H1 (cell line): ENCODE measurements at regions of chr7 and their contacts with region 1.

Region 1: GRCh38 chr7:135645296-135645904 is 16.9 kb upstream of the STMP1 start:
- DNase-seq: no peak
- H3K4me3 ChIP-seq: no peak overlapping the region
- H3K27ac ChIP-seq: no peak overlapping the region
- H3K4me1 ChIP-seq: no peaks in the 10 kb centered on the region
- H3K27me3 ChIP-seq: no peaks in the 10 kb centered on the region
- CTCF ChIP-seq: peak in 2 of 3 experiments; percentile 32 to 58; a peak in 2 of 4 replicates
- EP300 ChIP-seq: no peak
- POLR2A ChIP-seq: no peak
- RAD21 ChIP-seq: peak; percentile 26 to 32; a peak in 2 of 4 replicates

Region 2: GRCh38 chr7:135573541-135573940 is 71.9 kb before region 1 on chr7:
- CTCF ChIA-PET with region 1: interaction called, 17 read pairs
- POLR2A ChIA-PET with region 1: interaction called, 3 read pairs
- DNase-seq: no peak
- H3K4me3 ChIP-seq: no peak overlapping the region
- H3K27ac ChIP-seq: no peak overlapping the region
- H3K4me1 ChIP-seq: no peaks in the 10 kb centered on the region
- H3K27me3 ChIP-seq: no peaks in the 10 kb centered on the region
- CTCF ChIP-seq: no peak
- EP300 ChIP-seq: no peak
- POLR2A ChIP-seq: no peak
- RAD21 ChIP-seq: no peak

Region 3: DNA sequence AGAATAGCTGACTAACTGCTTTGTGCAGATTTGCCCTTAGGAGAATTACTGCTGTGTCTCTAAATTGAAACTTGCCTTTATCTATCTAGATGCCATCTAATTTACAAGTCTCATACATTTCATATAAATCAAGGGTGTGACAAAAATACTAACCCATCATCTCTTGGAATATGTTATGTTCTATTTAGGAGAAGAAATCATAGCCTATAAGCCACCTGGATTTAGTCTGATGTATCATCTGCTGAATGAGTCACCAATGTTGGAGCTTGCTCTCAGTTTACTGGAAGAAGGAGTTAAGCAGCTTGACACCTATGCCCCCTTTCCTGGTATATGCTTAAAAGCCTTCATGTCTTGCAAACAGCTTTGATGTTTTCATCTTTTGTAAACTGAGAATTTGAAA is 44.2 kb before region 1 on chr7:
- CTCF ChIA-PET with region 1: interaction called, 18 read pairs
- POLR2A ChIA-PET with region 1: no interaction called
- DNase-seq: no peak
- H3K4me3 ChIP-seq: no peak overlapping the region
- H3K27ac ChIP-seq: no peak overlapping the region
- H3K4me1 ChIP-seq: no peaks in the 10 kb centered on the region
- H3K27me3 ChIP-seq: no peaks in the 10 kb centered on the region
- CTCF ChIP-seq: no peak
- EP300 ChIP-seq: no peak
- POLR2A ChIP-seq: no peak
- RAD21 ChIP-seq: no peak

Region 4: GRCh38 chr7:135620980-135621850 is 24.2 kb before region 1 on chr7:
- CTCF ChIA-PET with region 1: interaction called, 114 read pairs
- POLR2A ChIA-PET with region 1: no interaction called
- DNase-seq: peak in 1 of 2 experiments; percentile 1
- H3K4me3 ChIP-seq: no peak overlapping the region
- H3K27ac ChIP-seq: no peak overlapping the region
- H3K4me1 ChIP-seq: no peaks in the 10 kb centered on the region
- H3K27me3 ChIP-seq: no peaks in the 10 kb centered on the region
- CTCF ChIP-seq: peak in 2 of 3 experiments; percentile 39 to 70; a peak in 2 of 4 replicates
- EP300 ChIP-seq: no peak
- POLR2A ChIP-seq: no peak
- RAD21 ChIP-seq: peak; percentile 25 to 31; a peak in 3 of 4 replicates

Region 5: DNA sequence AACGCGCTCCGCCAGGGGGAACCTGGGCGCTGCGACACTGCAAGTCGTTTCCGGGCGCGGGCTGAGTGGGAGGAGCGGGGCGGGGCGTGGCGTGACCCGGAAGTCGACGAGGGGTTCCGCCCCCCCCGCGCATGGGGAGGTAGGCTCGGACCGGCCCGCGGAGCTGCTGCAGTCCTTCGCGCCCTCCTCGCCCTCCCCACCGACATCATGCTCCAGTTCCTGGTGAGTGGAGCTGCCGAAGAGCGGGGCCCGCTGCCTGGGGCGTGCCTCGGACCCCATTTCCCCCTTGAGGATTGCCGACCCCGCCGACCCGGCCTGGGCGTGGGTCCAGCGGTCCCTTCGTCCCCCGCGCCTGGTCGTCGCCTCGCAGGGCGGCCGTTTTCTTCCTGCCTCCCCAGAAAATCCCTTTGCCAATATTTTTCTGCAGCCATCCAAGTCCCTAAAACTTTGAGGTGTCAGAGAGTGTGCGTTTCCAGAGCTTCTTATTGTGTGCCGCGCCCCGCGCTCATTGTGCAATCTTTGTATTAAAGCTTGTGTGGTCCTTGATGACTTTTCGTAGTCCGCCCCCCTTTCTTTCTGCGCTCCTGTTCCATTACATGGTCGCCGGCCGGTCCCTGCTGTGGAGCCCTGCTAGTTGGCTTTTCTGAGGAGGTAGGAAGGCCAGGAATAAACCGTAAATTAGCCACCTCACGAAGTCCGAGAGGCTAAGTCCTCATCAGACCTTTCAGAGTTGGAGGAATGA is 17.1 kb after region 1 on chr7 and contains the start of gene STMP1:
- CTCF ChIA-PET with region 1: interaction called, 38 read pairs
- POLR2A ChIA-PET with region 1: interaction called, 4 read pairs
- DNase-seq: peak; percentile 92 to 98
- H3K4me3 ChIP-seq: peak within 1 kb of the TSS; percentile 87 to 95 (median 93)
- H3K27ac ChIP-seq: peak within 1 kb of the TSS; percentile 81
- H3K4me1 ChIP-seq: no peaks in the 10 kb centered on the region; a peak in 2 of 7 replicates
- H3K27me3 ChIP-seq: no peaks in the 10 kb centered on the region
- CTCF ChIP-seq: peak; percentile 48 to 72 (median 67); a peak in 3 of 4 replicates
- EP300 ChIP-seq: no peak
- POLR2A ChIP-seq: peak; percentile 90 to 93
- RAD21 ChIP-seq: peak; percentile 42 to 46; a peak in 2 of 4 replicates
- total RNA-seq, gene STMP1: 36.7 and 36.9 TPM in 2 replicates